Activated CD4-positive, alpha-beta memory T cell treated with anti-CD3 and anti-CD28 coated beads for 36 hours (primary cell): ENCODE measurements at regions of chr2 and their contacts with region 1.

Region 1: DNA sequence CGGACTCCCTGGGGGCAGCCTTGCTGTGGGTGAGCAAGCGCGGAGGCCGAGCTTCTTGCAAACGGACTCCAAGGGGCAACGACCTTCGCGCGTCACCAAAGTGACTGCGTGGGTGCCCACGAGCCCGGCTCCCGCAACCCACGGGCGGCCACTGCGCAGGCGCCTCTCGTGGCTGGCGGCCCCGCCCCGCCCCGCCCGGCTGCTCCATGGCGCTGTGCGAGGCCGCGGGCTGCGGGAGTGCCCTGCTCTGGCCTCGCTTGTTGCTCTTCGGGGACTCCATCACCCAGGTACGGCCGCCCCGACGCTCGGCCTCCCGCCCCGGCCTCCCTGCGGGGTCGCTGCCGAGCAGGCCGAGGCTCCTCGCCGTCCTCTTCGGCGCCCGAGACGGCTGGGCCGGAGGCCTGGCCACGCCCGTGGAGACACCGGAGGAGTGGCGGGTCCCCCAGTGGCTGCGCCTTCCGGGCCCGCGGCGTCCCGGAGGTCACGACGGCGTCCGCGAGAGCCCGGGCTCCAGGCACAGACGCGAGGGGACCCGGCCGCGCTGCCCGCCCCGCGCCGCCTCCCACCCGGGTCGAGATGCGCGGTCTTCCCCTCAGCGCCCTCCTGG is at the start of gene IAH1:
- DNase-seq: peak; percentile 77
- H3K4me3 Mint-ChIP-seq: peak within 1 kb of the TSS; percentile 79
- H3K27ac Mint-ChIP-seq: peak within 1 kb of the TSS; percentile 76
- H3K4me1 Mint-ChIP-seq: peaks cover 43% of the 10 kb centered on the region
- H3K27me3 Mint-ChIP-seq: no peaks in the 10 kb centered on the region
- total RNA-seq, gene IAH1: 83.3 to 87.1 TPM

Region 2: GRCh38 chr2:9423100-9423921 is 51.2 kb before region 1 on chr2 and contains the starts of genes CPSF3 and ITGB1BP1:
- CTCF ChIA-PET with region 1: interaction called, 3 read pairs
- POLR2A ChIA-PET with region 1: interaction called, 4 read pairs
- intact Hi-C with region 1: loop called (anchors 1 kb)
- DNase-seq: peak; percentile 98
- H3K4me3 Mint-ChIP-seq: peak within 1 kb of the TSS; percentile 87
- H3K27ac Mint-ChIP-seq: peak within 1 kb of the TSS; percentile 88
- H3K4me1 Mint-ChIP-seq: peaks cover 35% of the 10 kb centered on the region
- H3K27me3 Mint-ChIP-seq: no peaks in the 10 kb centered on the region
- total RNA-seq, gene CPSF3: 77.5 to 78.1 TPM
- total RNA-seq, gene ITGB1BP1: 136 to 142 TPM